Esophagus squamous epithelium (tissue), 5 donors: ENCODE measurements at regions of chr11 and their contacts with region 1.

Region 1: GRCh38 chr11:19742588-19743292 is 30.1 kb downstream of the NAV2 start:
- DNase-seq: no peak
- H3K4me3 ChIP-seq: no peak overlapping the region
- H3K27ac ChIP-seq: no peak overlapping the region
- H3K4me1 ChIP-seq: peaks cover 0 to 15% (median 4%) of the 10 kb centered on the region in 3 donors
- H3K27me3 ChIP-seq: no peaks in the 10 kb centered on the region
- CTCF ChIP-seq: peak; percentile 79 to 97 (median 94)
- POLR2A ChIP-seq: no peak

Region 2: GRCh38 chr11:19561011-19561410 is 181.7 kb before region 1 on chr11:
- intact Hi-C with region 1: loop called (anchors 2 kb)
- DNase-seq: no peak
- H3K4me3 ChIP-seq: no peak overlapping the region
- H3K27ac ChIP-seq: no peak overlapping the region
- H3K4me1 ChIP-seq: peaks cover 0 to 14% (median 6%) of the 10 kb centered on the region in 3 donors
- H3K27me3 ChIP-seq: peaks cover 0 to 8% (median 0%) of the 10 kb centered on the region in 4 donors
- CTCF ChIP-seq: no peak
- POLR2A ChIP-seq: no peak